Ascending aorta (tissue), 2 donors: ENCODE measurements at regions of chr18 and their contacts with region 1.

Region 1: GRCh38 chr18:3245853-3246634 is 1.6 kb upstream of the MYL12A start:
- DNase-seq: peak; percentile 54 to 93
- H3K4me3 ChIP-seq: peak overlapping the region; percentile 81 to 92
- H3K27ac ChIP-seq: peak overlapping the region; percentile 100
- H3K4me1 ChIP-seq: peaks cover 2 to 5% of the 10 kb centered on the region in 2 donors
- H3K27me3 ChIP-seq: no peaks in the 10 kb centered on the region
- CTCF ChIP-seq: peak; percentile 93 to 98 (median 98)

Region 2: DNA sequence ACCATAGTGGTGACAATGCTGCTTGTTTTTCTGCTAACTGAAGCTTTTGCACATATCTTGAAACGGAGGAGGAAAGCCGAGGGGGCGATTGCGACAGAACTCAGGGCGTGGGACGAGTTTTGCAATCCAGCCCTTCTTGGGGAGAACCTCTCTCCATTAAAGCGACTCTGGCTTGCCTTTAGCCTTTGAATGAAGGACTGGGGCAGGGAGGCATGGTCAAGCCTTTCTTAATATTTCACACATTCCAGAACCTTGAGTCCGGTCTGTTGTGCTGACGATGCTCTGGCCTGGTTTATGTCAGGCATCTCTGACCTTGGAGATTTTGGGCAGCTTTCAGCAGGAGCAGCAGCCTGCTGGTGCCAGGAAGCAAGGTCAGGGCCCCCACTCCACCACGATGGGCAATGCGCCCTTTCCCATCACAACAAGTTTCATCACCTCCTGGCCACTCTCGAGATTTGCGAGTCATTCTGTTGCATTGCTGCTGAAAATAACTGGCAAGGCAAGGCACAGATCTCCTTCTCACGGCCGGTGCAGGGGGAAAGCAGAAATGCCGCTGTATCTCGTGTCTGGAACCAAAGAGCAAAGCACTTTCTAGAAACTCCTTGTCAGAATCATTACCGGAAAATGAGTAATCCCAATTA is 388.4 kb before region 1 on chr18:
- intact Hi-C with region 1: loop called (anchors 5 kb)
- DNase-seq: peak; percentile 36 to 94
- H3K4me3 ChIP-seq: peak overlapping the region in 1 of 2 donors; percentile 2
- H3K27ac ChIP-seq: peak overlapping the region; percentile 55 to 78
- H3K4me1 ChIP-seq: peaks cover 0 to 25% of the 10 kb centered on the region in 2 donors
- H3K27me3 ChIP-seq: no peaks in the 10 kb centered on the region
- CTCF ChIP-seq: peak in 1 of 3 experiments; percentile 9

Region 3: DNA sequence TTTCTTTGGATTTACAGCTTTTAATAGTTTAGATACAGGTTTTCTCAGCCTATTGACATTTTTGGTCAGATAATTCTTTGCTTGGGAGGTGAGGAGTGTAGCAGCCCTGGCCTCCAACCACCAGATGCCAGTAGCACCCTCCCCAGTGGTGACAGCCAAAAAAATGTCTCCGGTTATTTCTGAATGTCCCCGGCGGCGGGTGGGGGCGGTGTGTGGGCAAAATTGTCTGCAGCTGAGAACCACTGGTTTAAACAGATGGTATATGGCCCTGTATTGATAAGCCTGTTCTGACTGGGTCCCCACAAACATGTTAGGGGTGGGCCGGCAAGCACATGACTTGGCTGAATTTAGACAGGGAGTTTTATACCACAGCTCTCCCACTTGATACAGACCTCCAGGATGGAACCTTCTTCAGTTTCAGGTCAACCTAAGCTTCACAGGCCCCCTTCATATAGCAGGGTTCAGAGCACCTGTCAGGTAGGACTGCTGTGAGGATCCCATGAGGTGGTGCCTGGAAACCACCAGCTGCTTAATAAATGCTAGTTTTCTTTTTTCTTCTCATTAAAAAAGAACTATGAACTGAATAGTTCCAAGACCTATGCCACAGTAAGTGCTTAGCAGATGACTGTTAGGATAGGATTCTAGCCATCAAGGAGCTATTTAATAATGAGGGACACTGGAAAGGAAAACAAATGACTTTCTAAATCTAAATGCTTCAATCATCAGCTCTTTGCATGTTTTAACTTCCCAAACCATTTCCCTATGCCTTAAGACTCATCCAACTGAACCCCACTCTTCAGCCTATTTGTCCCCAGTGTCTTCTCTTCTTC is 251.2 kb before region 1 on chr18:
- intact Hi-C with region 1: loop called (anchors 5 kb)
- DNase-seq: peak in 1 of 2 donors; percentile 75
- H3K4me3 ChIP-seq: no peak overlapping the region
- H3K27ac ChIP-seq: peak overlapping the region; percentile 60 to 71
- H3K4me1 ChIP-seq: peaks cover 7 to 32% of the 10 kb centered on the region in 2 donors
- H3K27me3 ChIP-seq: no peaks in the 10 kb centered on the region
- CTCF ChIP-seq: peak; percentile 47 to 60 (median 50)

Region 4: GRCh38 chr18:3151399-3152264 is 94.4 kb before region 1 on chr18:
- intact Hi-C with region 1: loop called (anchors 2 kb)
- DNase-seq: no peak
- H3K4me3 ChIP-seq: no peak overlapping the region
- H3K27ac ChIP-seq: no peak overlapping the region
- H3K4me1 ChIP-seq: peaks cover 3 to 11% of the 10 kb centered on the region in 2 donors
- H3K27me3 ChIP-seq: no peaks in the 10 kb centered on the region
- CTCF ChIP-seq: peak; percentile 21 to 84 (median 80)

Region 5: GRCh38 chr18:3294435-3295080 is 48.5 kb after region 1 on chr18:
- intact Hi-C with region 1: no loop called
- DNase-seq: no peak
- H3K4me3 ChIP-seq: no peak overlapping the region
- H3K27ac ChIP-seq: no peak overlapping the region
- H3K4me1 ChIP-seq: peaks cover 0 to 2% of the 10 kb centered on the region in 2 donors
- H3K27me3 ChIP-seq: no peaks in the 10 kb centered on the region
- CTCF ChIP-seq: no peak